Activated B cell treated with CpG ODN at 0.5 μM for 24 hours (primary cell): ENCODE measurements at regions of chr9 and their contacts with region 1.

Region 1: GRCh38 chr9:116494815-116495634 is 192.1 kb upstream of the TRIM32 start:
- DNase-seq: no peak
- ATAC-seq: no peak
- H3K4me3 Mint-ChIP-seq: no peak overlapping the region
- H3K27ac Mint-ChIP-seq: no peak overlapping the region
- H3K4me1 Mint-ChIP-seq: no peaks in the 10 kb centered on the region
- H3K27me3 Mint-ChIP-seq: peaks cover 2% of the 10 kb centered on the region
- CTCF ChIP-seq: no peak

Region 2: DNA sequence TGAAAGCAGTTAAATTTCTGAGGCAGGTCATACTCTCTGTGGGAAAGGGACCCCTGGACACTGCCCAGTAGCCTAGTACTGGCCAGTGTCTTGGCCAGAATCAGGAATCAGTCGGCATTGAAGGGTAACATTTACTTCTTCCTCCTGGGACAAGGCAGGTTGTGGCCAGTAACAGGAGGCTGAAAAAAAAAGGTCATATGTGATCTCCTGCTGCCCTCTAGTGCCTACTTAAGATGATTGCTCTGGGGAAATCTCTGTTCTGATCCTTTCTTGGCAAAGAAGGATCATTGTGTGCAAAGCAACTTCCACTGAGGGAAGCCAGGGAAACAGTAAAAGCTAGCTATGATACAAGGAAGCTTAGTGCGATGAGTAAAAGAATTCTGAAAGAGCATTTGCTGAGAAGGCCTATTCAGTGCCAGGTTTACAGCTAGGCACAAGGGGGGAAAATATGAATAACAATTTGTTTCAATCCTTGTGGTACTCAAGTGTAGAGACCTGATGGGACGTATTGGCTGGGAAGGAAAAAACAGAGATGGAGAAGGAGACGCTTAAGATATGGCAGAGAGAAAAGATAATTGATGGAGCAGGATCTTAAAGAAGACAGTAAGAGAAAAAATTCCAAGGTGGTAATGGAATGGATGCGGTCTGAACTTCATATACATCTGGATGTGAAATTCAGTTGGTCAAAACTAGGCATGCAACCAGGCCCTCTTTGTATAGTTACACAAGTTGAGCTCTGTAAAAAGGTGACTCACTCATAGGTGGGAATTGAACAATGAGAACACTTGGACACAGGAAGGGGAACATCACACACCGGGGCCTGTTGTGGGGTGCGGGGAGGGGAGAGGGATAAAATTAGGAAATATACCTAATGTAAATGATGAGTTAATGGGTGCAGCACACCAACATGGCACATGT is 166.3 kb after region 1 on chr9:
- CTCF ChIA-PET with region 1: no interaction called
- POLR2A ChIA-PET with region 1: no interaction called
- intact Hi-C with region 1: loop called (anchors 1 kb)
- DNase-seq: no peak
- ATAC-seq: peak; percentile 49
- H3K4me3 Mint-ChIP-seq: no peak overlapping the region
- H3K27ac Mint-ChIP-seq: no peak overlapping the region
- H3K4me1 Mint-ChIP-seq: no peaks in the 10 kb centered on the region
- H3K27me3 Mint-ChIP-seq: no peaks in the 10 kb centered on the region
- CTCF ChIP-seq: no peak